Right lobe of liver (tissue), 6 donors: ENCODE measurements at regions of chr17 and their contacts with region 1.

Region 1: DNA sequence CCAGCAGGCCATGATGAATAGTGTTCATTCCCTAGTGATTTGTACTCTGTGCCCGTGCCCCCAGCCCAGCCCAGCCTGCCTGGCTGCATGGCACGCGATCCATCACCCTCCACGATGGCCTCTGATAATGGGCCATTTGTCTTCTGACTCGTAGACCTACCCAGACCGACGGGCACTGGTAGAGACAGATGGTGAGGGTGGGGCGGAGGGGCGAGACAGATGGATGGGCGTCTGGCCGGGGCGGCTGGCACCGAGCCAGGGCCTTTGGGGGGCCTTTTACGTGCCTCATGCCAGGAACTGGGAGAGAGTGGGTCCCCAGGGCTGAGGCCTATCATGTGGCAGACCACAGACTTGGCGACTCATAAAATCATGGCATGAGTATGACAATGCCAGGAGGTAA is 25.4 kb downstream of the CRHR1 start:
- DNase-seq: no peak
- ATAC-seq: no peak
- H3K4me3 ChIP-seq: no peak overlapping the region
- H3K27ac ChIP-seq: no peak overlapping the region
- H3K4me1 ChIP-seq: no peaks in the 10 kb centered on the region
- H3K27me3 ChIP-seq: no peaks in the 10 kb centered on the region
- CTCF ChIP-seq: no peak
- POLR2A ChIP-seq: no peak

Region 2: DNA sequence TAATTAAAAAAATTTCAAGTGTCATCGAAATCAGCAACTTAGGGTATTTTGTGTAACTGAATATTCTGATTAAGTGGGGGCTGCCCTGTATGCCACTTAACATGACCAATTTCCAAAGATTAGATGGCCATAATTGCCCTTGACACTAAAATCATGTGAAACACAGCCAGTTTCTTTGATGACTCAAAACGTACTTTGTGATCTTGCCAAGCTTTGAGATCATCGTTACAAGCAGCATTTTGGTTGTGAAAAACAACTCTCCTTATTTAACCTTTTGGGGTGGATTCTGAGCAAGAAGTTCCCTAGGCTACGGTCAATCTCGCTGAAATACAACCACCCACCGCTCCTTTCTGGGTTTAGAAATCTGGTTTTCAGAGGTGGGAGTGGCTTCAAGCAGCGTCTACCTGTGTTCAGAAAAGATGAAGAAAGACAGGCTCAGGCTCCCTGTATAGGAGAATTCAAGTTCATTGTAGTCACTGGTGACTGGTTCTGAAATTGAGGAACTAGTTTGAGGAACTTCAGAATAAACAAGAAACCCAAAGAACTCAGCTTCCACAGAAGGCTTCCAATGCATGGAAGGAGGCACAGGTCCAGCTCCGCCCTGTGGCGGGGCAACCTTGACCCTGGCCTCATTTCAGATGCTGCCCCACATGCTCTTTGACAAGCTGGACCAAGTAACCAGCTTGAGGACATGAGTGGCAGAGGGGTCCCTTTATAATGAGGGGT is 502.0 kb before region 1 on chr17:
- intact Hi-C with region 1: no loop called
- DNase-seq: no peak
- ATAC-seq: peak; percentile 2 to 41 (median 22)
- H3K4me3 ChIP-seq: no peak overlapping the region
- H3K27ac ChIP-seq: peak overlapping the region; percentile 61 to 70 (median 61)
- H3K4me1 ChIP-seq: peaks cover 0 to 75% (median 38%) of the 10 kb centered on the region in 4 donors
- H3K27me3 ChIP-seq: no peaks in the 10 kb centered on the region
- CTCF ChIP-seq: no peak
- POLR2A ChIP-seq: no peak

Region 3: DNA sequence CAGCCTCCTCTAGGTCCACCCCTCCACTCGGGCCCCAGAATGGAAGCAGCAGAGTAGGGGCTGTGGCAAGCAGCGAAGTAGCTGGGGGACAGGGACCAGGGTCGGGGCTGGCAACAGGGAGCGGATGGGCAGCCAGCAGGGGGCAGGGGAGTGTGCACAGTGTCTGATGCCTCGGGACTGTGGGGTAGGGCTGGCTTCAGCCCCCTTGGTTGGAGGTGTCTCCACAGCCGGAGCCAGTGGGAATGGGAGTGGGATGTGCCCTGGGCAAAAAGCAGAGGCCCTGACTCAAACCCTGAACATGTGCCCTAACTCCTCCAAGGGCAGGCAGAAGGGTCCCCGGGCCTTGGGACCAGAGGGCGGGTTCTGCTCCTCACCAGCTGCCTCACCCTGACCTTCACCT is 358.3 kb before region 1 on chr17:
- intact Hi-C with region 1: no loop called
- DNase-seq: no peak
- ATAC-seq: no peak
- H3K4me3 ChIP-seq: no peak overlapping the region
- H3K27ac ChIP-seq: no peak overlapping the region
- H3K4me1 ChIP-seq: peaks cover 0 to 23% (median 3%) of the 10 kb centered on the region in 4 donors
- H3K27me3 ChIP-seq: no peaks in the 10 kb centered on the region
- CTCF ChIP-seq: no peak
- POLR2A ChIP-seq: no peak

Region 4: GRCh38 chr17:45740553-45741330 is 68.7 kb before region 1 on chr17:
- intact Hi-C with region 1: loop called in 1 of 2 experiments (anchors 10 kb)
- DNase-seq: no peak
- ATAC-seq: peak in 2 of 4 donors; percentile 39 to 46
- H3K4me3 ChIP-seq: no peak overlapping the region
- H3K27ac ChIP-seq: no peak overlapping the region
- H3K4me1 ChIP-seq: no peaks in the 10 kb centered on the region
- H3K27me3 ChIP-seq: no peaks in the 10 kb centered on the region
- CTCF ChIP-seq: no peak
- POLR2A ChIP-seq: no peak